WTC11 (cell line): ENCODE measurements at regions of chr2 and their contacts with region 1.

Region 1: GRCh38 chr2:38430597-38431207 is 53.6 kb upstream of the ATL2 start:
- DNase-seq: peak; percentile 17
- ATAC-seq: peak; percentile 12
- H3K4me3 Mint-ChIP-seq: no peak overlapping the region
- H3K27ac Mint-ChIP-seq: peak overlapping the region; percentile 72; the same call in 1 of the 2 replicates
- H3K4me1 Mint-ChIP-seq: peaks cover 55% of the 10 kb centered on the region
- H3K27me3 Mint-ChIP-seq: peaks cover 15% of the 10 kb centered on the region
- CTCF ChIP-seq: no peak

Region 2: DNA sequence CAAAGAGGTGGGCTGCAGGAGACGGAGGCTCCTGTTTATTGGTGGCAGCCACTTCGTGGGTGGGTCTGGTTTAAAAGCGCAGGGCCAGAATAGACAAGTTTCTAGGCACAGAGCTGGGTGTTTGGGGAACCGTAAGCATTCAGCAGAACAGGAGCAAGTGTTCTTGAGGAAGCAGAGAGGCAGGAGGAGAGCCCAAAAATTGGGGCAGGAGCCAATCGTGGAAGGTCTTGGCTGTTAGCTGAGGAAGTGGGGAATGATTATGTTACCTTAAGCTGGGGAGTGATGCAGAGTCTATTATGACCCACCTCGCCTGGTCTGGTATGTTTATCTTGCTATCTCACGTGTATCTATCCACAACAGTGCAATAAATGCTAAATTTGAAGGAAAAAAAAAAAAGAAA is 10.6 kb after region 1 on chr2:
- CTCF ChIA-PET with region 1: no interaction called
- POLR2A ChIA-PET with region 1: no interaction called
- DNase-seq: no peak
- ATAC-seq: no peak
- H3K4me3 Mint-ChIP-seq: no peak overlapping the region
- H3K27ac Mint-ChIP-seq: no peak overlapping the region
- H3K4me1 Mint-ChIP-seq: peaks cover 54% of the 10 kb centered on the region
- H3K27me3 Mint-ChIP-seq: peaks cover 21% of the 10 kb centered on the region
- CTCF ChIP-seq: no peak

Region 3: DNA sequence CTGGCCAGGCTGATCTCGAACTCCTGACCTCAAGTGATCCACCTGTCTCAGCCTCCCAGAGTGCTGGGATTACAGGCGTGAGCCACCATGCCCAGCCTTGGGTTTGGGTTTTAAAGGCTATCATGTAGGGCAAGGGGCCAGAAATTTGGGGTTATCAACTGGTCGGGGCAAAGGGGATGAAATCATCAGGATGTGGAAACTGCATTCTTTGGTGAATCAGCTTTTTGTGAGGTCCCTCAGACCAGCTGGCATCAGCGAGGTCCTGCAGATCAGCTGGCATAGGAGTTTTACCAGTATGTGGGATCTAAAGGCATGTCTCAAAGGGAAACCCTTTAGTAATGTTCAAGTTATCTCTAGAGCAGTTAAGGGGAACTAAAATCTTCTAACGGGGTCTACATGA is 340.9 kb after region 1 on chr2:
- CTCF ChIA-PET with region 1: no interaction called
- POLR2A ChIA-PET with region 1: interaction called, 10 read pairs
- DNase-seq: no peak
- ATAC-seq: no peak
- H3K4me3 Mint-ChIP-seq: no peak overlapping the region
- H3K27ac Mint-ChIP-seq: no peak overlapping the region
- H3K4me1 Mint-ChIP-seq: no peaks in the 10 kb centered on the region
- H3K27me3 Mint-ChIP-seq: peaks cover 14% of the 10 kb centered on the region
- CTCF ChIP-seq: no peak